Ovary (tissue), 10 donors: ENCODE measurements at regions of chr1 and their contacts with region 1.

Region 1: GRCh38 chr1:34742667-34743270 is 12.1 kb upstream of the GJB5 start:
- DNase-seq: peak; percentile 32 to 80 (median 69)
- H3K4me3 ChIP-seq: no peak overlapping the region
- H3K27ac ChIP-seq: no peak overlapping the region
- H3K4me1 ChIP-seq: no peaks in the 10 kb centered on the region
- H3K27me3 ChIP-seq: no peaks in the 10 kb centered on the region
- CTCF ChIP-seq: peak; percentile 50 to 72 (median 71)
- EP300 ChIP-seq: no peak
- POLR2A ChIP-seq: no peak

Region 2: DNA sequence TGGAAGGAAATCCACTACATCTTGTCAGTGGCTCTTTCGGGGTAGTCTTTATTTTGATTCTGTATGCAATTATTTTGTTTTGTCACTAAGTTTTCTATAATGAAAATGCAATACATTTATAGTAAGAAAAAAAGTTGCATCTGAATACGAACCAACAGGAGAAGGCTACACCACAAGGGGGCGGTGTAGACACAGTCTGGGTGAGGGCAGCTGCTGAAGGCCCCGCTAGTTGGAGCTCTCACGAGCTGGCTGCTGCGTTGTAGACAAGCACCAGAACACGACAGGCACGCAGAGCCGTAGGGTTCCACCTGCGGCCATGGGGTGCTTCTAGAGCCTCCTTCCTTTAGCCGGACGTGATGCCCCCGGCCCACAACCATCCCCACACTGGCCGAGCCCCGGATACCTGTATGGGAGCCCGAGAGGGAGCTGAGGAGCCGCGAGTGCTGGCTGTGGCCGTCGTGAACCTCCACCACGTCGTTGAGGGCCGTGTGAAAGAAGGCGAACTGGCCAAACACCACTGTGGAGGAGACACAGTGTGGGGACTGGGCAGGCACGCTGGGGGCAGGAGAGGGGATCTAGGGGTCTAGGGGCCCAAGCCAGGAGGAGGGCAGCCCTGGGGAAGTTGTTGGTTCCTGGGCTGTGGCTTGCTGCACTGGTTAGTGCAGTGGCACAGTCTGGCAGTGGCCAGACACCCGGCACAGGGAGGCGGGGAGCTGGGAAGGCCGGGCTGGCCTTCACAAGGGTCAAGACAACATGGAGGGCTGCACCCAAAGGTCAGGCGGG is 1109.6 kb before region 1 on chr1:
- intact Hi-C with region 1: loop called in 2 of 4 experiments (anchors 10 kb)
- DNase-seq: peak; percentile 71 to 83 (median 81)
- H3K4me3 ChIP-seq: no peak overlapping the region
- H3K27ac ChIP-seq: no peak overlapping the region
- H3K4me1 ChIP-seq: no peaks in the 10 kb centered on the region
- H3K27me3 ChIP-seq: no peaks in the 10 kb centered on the region
- CTCF ChIP-seq: peak; percentile 40 to 62 (median 53)
- EP300 ChIP-seq: no peak
- POLR2A ChIP-seq: no peak

Region 3: GRCh38 chr1:34073028-34073695 is 669.6 kb before region 1 on chr1:
- intact Hi-C with region 1: no loop called
- DNase-seq: no peak
- H3K4me3 ChIP-seq: no peak overlapping the region
- H3K27ac ChIP-seq: no peak overlapping the region
- H3K4me1 ChIP-seq: no peaks in the 10 kb centered on the region
- H3K27me3 ChIP-seq: no peaks in the 10 kb centered on the region
- CTCF ChIP-seq: no peak
- EP300 ChIP-seq: no peak
- POLR2A ChIP-seq: no peak